ENCODE measurements at regions of chr12 and their contacts with region 1.

Region 1: DNA sequence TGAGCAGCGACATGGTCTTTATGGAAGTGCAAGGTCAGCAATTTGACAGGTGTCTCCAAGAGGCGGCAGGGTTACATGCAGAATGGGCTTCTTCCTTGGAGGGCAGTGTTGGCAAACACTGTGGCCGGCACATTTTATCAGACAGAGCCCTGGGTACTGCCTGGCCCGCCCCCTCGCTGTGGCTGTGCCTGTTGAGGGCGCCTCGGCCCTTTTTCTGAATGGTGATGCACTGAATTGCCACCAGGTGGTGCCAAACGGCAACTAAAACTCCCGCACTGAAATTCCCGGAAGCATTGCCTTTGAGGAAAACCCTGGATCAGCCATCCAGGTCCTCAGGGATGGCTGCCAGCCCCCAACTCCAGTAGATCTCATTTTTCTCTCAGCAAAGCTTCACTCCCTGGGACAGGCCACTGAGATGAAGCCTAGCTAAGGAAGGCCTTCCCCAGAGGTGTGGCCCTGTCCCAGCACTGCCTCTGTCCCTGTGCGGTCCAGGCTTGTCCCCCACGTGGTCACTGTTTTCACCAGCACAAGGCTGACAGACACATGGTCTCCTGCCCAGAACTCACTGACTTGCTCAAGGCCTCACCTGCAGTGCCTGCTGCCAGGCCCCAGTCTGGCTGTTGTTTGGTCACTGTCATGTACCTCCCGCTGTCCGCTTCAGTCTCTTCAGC is 73.6 kb downstream of the TESC start:
- DNase-seq: peak in 2 of 3 donors; percentile 50 to 51
- H3K4me3 ChIP-seq: no peak overlapping the region
- H3K27ac ChIP-seq: no peak overlapping the region
- H3K4me1 ChIP-seq: peaks cover 0 to 4% (median 1%) of the 10 kb centered on the region in 4 experiments
- H3K27me3 ChIP-seq: no peaks in the 10 kb centered on the region

Region 2: GRCh38 chr12:117011988-117012805 is 13.4 kb before region 1 on chr12:
- CTCF ChIA-PET with region 1: interaction called, 29 read pairs
- POLR2A ChIA-PET with region 1: no interaction called
- DNase-seq: no peak
- H3K4me3 ChIP-seq: no peak overlapping the region
- H3K27ac ChIP-seq: no peak overlapping the region
- H3K4me1 ChIP-seq: no peaks in the 10 kb centered on the region
- H3K27me3 ChIP-seq: no peaks in the 10 kb centered on the region

Region 3: GRCh38 chr12:117045160-117046010 is 19.8 kb after region 1 on chr12:
- CTCF ChIA-PET with region 1: interaction called, 12 read pairs
- POLR2A ChIA-PET with region 1: no interaction called
- DNase-seq: peak; percentile 47 to 83 (median 82)
- H3K4me3 ChIP-seq: peak overlapping the region in 4 of 7 experiments; percentile 27 to 61 (median 41)
- H3K27ac ChIP-seq: peak overlapping the region in 1 of 2 experiments; percentile 68
- H3K4me1 ChIP-seq: peaks cover 3 to 67% (median 51%) of the 10 kb centered on the region in 4 experiments
- H3K27me3 ChIP-seq: no peaks in the 10 kb centered on the region

Region 4: DNA sequence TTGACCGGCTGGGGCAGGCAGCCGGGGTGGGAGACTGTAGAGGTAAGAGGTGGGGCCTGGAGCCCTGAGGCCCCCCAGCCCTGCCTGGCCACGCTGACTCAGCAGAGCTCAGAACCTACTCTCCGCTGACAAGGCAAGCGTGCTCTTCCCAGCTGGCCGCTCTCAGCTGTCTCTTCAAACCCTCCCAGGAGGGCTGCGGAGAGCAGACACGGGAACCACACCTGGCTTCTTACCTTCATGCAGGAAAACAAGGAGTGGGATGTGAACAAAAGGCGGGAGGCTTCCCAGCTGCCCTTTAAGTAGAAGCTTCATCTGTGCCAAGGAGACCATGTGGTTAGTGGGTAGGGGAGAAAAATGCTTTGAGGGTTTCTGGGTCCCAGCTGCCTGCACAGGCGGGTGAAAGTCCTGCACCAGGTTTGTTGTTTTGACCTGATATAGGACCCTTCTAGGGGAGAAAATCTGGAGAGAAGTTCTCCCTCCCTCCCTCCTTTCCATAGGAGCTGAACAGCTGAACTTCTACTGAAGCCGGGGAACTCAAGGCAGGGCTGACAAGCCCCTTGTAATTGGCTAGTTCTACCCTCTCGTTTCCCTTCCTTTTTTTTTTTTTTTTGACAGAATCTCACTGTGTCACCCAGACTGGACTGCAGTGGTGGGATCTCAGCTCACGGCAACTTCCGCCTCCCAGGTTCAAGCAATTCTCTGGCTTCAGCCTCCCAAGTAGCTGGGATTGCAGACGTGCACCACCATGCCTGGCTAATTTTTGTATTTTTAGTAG is 86.4 kb after region 1 on chr12:
- CTCF ChIA-PET with region 1: interaction called, 26 read pairs
- POLR2A ChIA-PET with region 1: no interaction called
- DNase-seq: peak in 2 of 3 donors; percentile 55 to 58
- H3K4me3 ChIP-seq: peak overlapping the region in 3 of 7 experiments; percentile 10 to 45 (median 14)
- H3K27ac ChIP-seq: no peak overlapping the region
- H3K4me1 ChIP-seq: peaks cover 0 to 26% (median 16%) of the 10 kb centered on the region in 4 experiments
- H3K27me3 ChIP-seq: no peaks in the 10 kb centered on the region

Region 5: DNA sequence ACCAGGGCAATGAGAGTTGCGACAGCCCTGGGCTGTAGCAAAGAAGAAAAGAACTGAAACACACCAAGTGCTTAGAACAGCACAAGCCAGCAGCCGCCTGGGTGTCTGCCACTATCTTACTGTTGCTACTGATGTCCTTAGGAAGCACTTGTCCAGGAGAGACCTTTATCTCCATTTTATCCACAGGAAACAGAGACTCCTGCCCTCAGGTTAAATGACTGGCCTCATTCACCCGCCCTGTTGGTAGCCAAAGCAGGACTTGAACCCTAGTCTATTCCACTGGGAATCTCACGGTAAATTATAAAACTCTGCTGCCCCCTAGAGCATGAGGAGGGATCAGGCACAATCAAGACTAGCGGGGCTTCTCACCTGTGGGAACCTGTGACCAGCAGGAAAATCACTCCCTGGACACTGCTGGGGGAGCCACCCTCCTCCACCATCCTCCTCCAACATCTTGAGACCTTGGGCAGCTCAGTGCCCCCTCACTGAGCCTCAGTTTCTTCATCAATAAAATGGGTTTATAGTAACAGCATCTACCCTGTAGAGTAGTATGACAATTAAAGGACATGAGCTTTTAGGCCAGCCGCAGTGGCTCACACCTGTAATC is 94.1 kb after region 1 on chr12:
- CTCF ChIA-PET with region 1: interaction called, 126 read pairs
- POLR2A ChIA-PET with region 1: no interaction called
- DNase-seq: peak in 1 of 3 donors; percentile 49
- H3K4me3 ChIP-seq: no peak overlapping the region
- H3K27ac ChIP-seq: no peak overlapping the region
- H3K4me1 ChIP-seq: peaks cover 0 to 21% (median 5%) of the 10 kb centered on the region in 4 experiments
- H3K27me3 ChIP-seq: no peaks in the 10 kb centered on the region

Region 6: DNA sequence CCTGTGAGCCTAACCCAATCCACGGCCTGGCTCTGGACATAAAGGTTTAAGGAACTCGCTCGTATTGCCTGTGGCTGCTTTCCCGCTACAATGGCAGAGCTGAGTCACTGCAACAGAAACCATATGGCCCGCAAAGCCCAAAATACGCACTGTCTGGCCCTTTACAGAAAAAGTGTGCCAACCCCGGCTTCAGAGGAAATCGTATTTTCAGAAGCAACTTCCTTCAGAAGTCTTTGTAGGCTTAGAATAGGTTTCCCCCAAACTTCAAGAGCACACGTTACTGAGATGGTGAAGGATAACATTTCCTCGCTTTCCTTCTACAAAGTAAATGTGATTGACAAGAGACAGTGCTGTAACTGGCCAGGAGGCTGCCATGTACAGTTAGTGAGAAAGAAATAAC is 108.4 kb after region 1 on chr12:
- CTCF ChIA-PET with region 1: interaction called, 75 read pairs
- POLR2A ChIA-PET with region 1: interaction called, 5 read pairs
- DNase-seq: peak; percentile 59 to 88 (median 86)
- H3K4me3 ChIP-seq: peak overlapping the region in 3 of 7 experiments; percentile 39 to 54 (median 41)
- H3K27ac ChIP-seq: peak overlapping the region in 1 of 2 experiments; percentile 6
- H3K4me1 ChIP-seq: peaks cover 4 to 28% (median 17%) of the 10 kb centered on the region in 4 experiments
- H3K27me3 ChIP-seq: no peaks in the 10 kb centered on the region

Region 7: GRCh38 chr12:117284140-117284539 is 258.5 kb after region 1 on chr12:
- CTCF ChIA-PET with region 1: no interaction called
- POLR2A ChIA-PET with region 1: no interaction called
- DNase-seq: no peak
- H3K4me3 ChIP-seq: no peak overlapping the region
- H3K27ac ChIP-seq: no peak overlapping the region
- H3K4me1 ChIP-seq: no peaks in the 10 kb centered on the region
- H3K27me3 ChIP-seq: peaks cover 0 to 7% (median 1%) of the 10 kb centered on the region in 5 experiments

Measured in common myeloid progenitor, CD34-positive (primary cell).